ENCODE measurements at regions of chr14 and their contacts with region 1.

Region 1: GRCh38 chr14:58733451-58734208 is 95.9 kb downstream of the DACT1 start:
- DNase-seq: peak; percentile 52
- ATAC-seq: peak; percentile 60
- H3K4me3 Mint-ChIP-seq: no peak overlapping the region
- H3K27ac Mint-ChIP-seq: peak overlapping the region; percentile 65
- H3K4me1 Mint-ChIP-seq: peaks cover 41% of the 10 kb centered on the region
- H3K27me3 Mint-ChIP-seq: peaks cover 13% of the 10 kb centered on the region

Region 2: DNA sequence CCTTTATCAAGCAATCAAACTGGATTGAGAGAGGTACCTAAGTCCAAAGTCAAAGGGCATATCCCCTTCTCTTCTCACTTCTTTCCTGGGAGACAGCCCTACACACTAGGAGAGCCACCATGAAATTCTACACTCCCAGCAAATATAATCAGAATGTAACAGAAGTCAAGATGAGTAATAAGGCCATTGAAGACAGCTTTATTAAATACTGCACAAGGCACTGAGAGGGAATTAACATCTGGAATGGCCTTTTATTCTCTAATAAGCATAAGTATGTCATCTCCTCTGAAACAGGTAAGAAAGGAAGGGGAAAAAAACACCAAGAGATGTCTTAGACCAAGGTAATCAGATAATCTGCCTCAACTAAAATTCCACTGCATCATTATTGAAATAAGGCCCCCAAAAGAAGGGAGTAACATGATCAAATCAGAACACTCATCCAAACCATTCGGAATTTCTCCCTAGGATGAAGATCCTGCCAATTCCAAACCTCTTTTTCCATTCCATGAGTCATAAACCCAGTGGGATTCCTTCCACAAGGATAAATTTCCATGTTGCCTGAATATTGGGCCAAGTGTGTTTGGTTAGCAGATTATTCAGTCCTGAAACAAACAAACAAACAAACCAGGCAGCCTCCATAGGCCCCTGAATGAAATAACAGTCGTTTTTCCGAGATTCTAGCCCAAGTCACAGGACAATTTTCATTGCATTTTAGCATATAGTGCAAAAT is 887.7 kb before region 1 on chr14:
- CTCF ChIA-PET with region 1: no interaction called
- POLR2A ChIA-PET with region 1: no interaction called
- intact Hi-C with region 1: no loop called
- DNase-seq: no peak
- ATAC-seq: no peak
- H3K4me3 Mint-ChIP-seq: no peak overlapping the region
- H3K27ac Mint-ChIP-seq: no peak overlapping the region
- H3K4me1 Mint-ChIP-seq: no peaks in the 10 kb centered on the region
- H3K27me3 Mint-ChIP-seq: peaks cover 7% of the 10 kb centered on the region

Region 3: DNA sequence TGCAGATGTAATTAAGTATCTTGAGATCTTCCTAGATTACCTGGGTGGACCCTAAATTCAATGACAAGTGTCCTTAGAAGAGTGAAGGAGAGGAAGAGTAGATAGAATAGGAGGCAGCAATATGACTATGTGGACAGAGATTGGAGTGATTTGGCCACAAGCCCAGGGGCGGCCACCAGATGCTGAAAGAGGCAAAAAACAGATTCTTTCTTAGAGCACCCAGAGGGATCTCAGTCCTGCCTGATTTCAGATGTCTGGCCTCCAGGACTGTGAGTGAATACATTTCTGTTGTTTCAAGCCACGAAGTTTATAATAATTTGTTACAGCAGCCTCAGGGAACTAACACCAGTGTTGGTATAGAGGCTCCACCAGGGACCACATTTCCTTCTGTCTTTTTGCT is 28.6 kb before region 1 on chr14:
- CTCF ChIA-PET with region 1: no interaction called
- POLR2A ChIA-PET with region 1: no interaction called
- intact Hi-C with region 1: no loop called
- DNase-seq: no peak
- ATAC-seq: no peak
- H3K4me3 Mint-ChIP-seq: no peak overlapping the region
- H3K27ac Mint-ChIP-seq: no peak overlapping the region
- H3K4me1 Mint-ChIP-seq: no peaks in the 10 kb centered on the region
- H3K27me3 Mint-ChIP-seq: peaks cover 9% of the 10 kb centered on the region

Region 4: DNA sequence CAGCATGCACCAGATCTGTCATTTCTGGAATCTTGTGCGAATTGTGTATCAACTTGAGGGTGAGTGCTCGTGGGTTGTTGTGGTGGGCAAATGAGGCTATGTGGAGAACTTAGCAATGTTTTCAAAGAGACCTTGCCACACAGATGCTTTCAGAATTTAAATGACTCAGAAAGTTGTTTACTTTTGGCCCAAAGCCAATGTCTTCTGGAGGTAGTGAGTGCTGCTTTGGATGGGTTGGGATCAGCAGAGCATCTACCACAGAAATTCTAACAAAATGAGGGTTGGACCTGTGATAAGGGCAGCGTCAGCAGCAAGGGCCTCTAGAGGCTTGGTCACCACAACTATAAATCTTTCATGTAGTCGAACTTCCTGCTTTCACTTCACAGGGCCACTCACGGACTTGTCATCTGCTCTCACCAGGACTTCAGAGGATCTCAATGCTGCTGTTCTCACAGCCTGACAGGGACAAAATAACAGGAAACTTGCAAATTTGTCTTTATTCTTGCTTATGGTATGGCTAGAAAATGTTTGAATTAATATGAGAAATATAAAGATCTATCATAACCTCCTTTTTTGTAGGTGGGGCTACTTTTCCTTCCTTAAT is 15.5 kb after region 1 on chr14:
- CTCF ChIA-PET with region 1: interaction called, 3 read pairs
- POLR2A ChIA-PET with region 1: no interaction called
- intact Hi-C with region 1: loop called in 1 of 2 experiments (anchors 1 kb)
- DNase-seq: peak; percentile 67
- ATAC-seq: peak; percentile 80
- H3K4me3 Mint-ChIP-seq: no peak overlapping the region
- H3K27ac Mint-ChIP-seq: no peak overlapping the region
- H3K4me1 Mint-ChIP-seq: peaks cover 9% of the 10 kb centered on the region
- H3K27me3 Mint-ChIP-seq: no peaks in the 10 kb centered on the region

Measured in activated CD4-positive, alpha-beta T cell treated with anti-CD3 and anti-CD28 coated beads for 36 hours (primary cell).